ENCODE measurements at regions of chr1 and their contacts with region 1.

Region 1: DNA sequence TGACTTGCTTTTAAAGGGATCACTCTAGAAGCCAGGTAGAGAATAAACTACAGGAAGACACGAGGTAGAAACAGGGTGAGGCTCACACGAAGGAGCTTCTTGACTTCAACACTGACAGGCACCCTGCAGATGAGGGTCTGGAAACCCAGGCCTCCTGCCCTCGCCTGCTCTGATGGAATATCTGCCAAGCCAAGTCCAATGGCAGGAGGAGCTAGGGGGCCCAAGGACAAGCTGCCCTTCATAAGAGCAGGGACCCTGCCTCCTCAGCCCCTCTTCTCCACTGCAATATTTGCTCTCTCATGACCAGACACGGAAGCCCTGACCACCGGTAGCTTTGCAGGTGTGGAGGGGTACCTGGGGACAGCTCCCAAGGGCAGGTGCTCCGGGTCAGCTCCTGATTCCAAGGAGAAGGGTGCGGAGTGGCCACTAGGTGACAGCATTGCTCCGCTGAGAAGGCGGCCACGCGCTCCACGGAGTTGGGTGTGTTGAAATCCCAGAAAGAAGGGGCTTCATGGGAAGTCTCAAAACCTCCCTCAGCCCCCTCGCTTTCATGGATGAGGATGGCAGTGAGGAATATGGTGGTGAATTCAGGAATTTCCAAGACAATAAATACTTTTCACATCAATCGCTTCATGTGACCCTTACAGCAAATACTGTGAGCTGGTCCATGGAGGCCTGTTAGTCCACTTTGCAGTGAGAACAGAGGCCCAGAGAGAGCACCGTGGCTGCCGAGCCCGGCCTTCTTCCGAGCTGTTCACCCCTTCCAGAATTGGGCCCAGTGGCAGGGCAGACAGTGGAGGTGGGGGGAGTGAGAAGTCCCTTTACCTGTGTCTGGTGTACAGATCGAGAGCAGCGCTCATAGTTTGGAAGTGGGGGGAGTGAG is 33.2 kb upstream of the PAX7 start:
- DNase-seq: no peak

Region 2: DNA sequence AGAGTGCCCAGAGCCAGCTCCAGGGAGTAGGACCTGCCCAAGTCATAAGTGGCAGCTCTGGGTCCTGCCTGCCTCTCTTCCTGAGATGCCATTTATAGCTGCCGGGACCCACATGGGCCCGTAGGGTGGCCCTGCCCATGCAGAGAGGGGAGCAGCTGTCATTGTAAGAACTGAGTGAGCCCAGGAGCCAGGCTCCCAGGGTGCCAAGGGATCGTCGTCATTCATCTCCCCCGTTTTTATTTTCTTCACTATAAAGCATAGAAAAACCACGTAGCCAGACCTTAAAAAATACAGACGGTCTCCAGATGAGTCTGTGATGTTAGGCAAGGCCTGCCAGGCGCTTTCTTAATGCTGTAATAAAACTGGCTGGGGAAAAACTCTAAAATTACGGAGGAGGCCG is 399.1 kb before region 1 on chr1:
- intact Hi-C with region 1: no loop called
- DNase-seq: no peak

Region 3: GRCh38 chr1:18560692-18561091 is 36.7 kb before region 1 on chr1:
- intact Hi-C with region 1: no loop called
- DNase-seq: no peak

Region 4: DNA sequence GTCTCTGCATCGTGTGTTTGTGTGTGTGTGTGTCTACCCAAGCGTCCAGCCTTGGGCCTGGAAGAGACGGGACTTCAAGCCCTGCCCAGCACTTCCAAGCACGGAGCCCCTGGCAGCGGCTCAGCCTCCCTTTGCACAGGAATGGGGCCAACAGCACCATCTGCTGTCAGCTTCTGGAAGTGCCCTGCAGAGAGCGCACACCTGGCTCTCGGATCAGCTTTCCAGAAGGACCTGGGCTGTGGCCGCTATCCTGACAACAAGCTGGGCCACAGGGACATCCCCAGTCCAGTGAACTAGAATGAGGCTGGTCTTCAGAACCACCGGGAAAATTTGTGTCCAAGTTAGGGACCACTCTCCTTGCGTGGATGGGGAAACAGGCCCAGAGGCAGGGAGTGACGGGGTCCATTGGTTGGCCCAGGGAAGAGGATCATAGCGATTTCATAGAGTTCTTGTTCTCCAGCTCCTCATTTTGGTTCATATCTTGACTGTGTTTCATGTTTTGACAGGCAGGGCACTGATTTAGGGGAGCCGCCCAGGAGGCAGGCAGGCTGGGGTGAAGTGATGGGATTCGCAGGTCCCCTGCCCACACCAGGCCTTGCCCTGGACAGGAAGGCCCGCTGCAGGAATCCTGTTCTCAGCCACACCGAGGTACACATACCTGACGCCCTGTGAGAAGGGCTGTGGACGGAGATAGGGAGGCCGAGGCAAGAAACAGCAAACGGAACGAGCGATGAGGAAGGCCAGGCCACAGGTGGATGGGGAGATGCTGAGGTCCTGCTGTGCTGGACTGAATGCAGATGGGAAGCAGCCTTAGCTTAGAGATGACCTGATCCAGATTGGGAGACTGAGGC is 223.6 kb after region 1 on chr1:
- intact Hi-C with region 1: loop called (anchors 1 kb)
- DNase-seq: peak; percentile 78

Region 5: DNA sequence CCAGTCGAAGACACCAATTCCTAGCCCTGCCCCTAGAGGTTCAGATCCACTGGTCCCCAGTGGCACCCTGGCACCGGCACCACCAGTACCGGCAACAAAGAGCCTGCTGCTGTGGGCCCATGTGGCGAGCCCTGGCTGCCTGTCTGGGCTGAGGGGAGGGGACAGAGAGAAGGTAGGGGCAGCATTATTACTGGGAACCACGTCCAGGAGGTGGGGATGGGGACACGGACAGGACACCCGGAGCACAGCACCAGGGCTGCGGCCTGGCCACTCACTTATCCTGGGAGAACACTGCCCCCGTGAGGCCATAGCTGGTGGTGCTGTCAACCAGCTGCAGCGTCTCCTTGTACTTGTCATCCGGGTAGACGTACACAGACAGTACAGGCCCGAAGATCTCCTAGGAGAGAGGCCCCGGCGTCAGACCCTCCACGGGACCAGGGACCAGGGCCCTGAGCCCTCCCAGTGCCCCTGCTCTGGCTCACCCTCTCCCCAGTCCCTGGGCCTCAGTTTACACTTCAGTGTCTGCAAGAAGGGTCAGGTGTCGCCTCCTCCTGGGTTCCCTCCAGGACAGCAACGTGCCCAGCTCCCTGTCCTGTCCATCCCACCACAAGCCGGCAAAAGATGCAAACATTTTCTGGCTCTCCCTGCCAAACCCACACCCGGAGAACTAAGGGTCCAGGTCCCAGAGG is 277.9 kb after region 1 on chr1:
- intact Hi-C with region 1: loop called (anchors 1 kb)
- DNase-seq: no peak